ENCODE measurements at regions of chr7 and their contacts with region 1.

Region 1: DNA sequence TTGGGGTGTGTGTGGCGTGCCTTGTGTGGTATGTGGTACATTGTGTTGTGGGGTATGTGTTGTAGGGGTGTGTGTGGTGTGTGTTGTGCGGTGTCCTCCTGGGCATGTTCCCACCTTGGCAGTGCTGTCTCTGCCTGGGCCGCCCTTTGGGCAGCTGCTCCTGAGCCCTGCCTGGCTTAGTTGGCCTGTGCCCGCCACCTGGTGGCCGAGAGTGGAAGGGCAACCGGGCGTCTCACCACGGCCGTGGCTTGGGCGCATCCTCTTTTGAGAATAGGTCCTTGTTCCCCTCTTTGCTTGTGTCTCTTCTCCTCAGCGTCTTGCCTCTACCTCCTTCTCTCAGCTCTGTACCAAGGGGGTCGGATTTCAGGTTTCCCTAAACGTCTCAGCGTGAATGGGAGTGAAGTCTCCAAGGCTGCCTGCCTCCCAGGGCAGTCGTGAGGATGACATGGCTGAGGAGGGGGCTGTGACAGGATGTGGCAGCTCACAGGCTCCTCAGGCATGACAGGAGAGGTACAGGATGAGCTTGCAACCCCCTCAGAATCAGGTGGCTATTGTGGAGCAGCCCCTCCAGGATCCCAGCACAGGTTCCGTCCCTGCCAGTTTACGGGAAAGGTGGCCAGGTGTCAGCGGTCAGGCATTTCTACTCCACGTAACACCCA is 98.4 kb upstream of the PODXL start:
- DNase-seq: peak; percentile 84 to 91 (median 88)
- ATAC-seq: peak; percentile 92
- H3K4me3 ChIP-seq: no peak overlapping the region
- H3K27ac ChIP-seq: no peak overlapping the region
- H3K4me1 ChIP-seq: no peaks in the 10 kb centered on the region
- H3K27me3 ChIP-seq: no peaks in the 10 kb centered on the region
- CTCF ChIP-seq: peak; percentile 78 to 96 (median 90)
- POLR2A ChIP-seq: no peak

Region 2: GRCh38 chr7:131507592-131508331 is 147.0 kb before region 1 on chr7:
- intact Hi-C with region 1: loop called (anchors 5 kb)
- DNase-seq: peak; percentile 87 to 92 (median 89)
- ATAC-seq: peak; percentile 84
- H3K4me3 ChIP-seq: no peak overlapping the region
- H3K27ac ChIP-seq: peak overlapping the region in 1 of 4 donors; percentile 11
- H3K4me1 ChIP-seq: peaks cover 36% of the 10 kb centered on the region
- H3K27me3 ChIP-seq: no peaks in the 10 kb centered on the region
- CTCF ChIP-seq: peak; percentile 71 to 96 (median 92)
- POLR2A ChIP-seq: no peak

Region 3: DNA sequence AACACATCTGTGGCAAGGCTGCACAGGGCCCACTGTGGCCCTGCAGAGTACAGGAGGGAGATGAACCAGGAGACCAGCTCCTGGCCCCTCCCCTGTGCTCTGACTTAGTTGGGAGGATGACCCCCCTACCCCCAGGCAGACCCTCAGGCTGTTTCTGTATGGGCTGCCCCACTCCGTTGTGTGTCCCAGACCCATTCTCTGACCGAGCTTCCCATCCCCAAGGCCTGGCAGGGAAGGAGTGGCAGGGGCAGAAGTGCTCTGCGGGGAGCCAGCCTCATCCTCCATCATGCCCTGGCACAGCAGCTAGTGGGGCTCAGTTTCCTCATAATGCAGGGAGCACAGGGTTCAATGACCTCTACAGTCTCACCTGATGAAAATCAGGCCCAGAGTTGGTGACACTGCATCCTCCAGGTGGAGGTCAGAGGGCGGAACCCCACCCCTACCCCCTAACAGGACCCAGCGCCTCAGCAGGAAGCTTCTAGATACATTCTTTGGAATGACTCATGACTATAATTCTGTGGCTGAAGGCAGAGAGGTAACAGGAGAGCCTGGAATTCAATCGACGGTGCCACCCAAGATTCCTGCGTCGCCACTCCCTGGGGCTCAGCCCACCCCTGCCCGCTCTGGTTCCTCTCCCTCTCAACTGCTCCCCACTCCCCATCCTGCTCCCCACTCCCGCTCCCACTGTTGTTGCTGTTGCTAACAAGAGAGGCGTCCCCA is 116.6 kb before region 1 on chr7:
- intact Hi-C with region 1: no loop called
- DNase-seq: peak in 1 of 4 donors; percentile 44
- ATAC-seq: no peak
- H3K4me3 ChIP-seq: no peak overlapping the region
- H3K27ac ChIP-seq: peak overlapping the region; percentile 66 to 86 (median 84)
- H3K4me1 ChIP-seq: peaks cover 100% of the 10 kb centered on the region
- H3K27me3 ChIP-seq: no peaks in the 10 kb centered on the region
- CTCF ChIP-seq: no peak
- POLR2A ChIP-seq: no peak

Region 4: GRCh38 chr7:131562941-131563340 is 91.9 kb before region 1 on chr7:
- intact Hi-C with region 1: loop called (anchors 10 kb)
- DNase-seq: no peak
- ATAC-seq: no peak
- H3K4me3 ChIP-seq: no peak overlapping the region
- H3K27ac ChIP-seq: no peak overlapping the region
- H3K4me1 ChIP-seq: peaks cover 7% of the 10 kb centered on the region
- H3K27me3 ChIP-seq: no peaks in the 10 kb centered on the region
- CTCF ChIP-seq: no peak
- POLR2A ChIP-seq: no peak

Region 5: DNA sequence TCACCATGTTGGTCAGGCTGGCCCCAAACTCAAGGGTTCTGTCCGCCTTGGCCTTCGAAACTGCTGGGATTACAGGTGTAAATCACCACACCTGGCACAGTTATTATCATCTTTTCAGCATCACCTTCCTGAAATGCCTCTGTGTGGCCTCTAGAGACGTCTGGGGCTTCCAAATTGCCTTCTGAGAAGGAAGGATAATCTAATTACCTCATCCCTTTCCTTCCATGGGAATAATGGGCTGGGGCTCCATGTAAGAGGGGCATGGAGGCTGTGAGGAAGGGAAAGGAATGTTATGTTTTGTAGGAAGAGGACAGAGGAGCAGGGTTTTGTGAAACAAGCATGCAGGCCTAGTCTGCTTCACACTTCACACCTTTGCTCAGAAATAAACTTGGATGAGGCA is 76.2 kb before region 1 on chr7:
- intact Hi-C with region 1: no loop called
- DNase-seq: no peak
- ATAC-seq: no peak
- H3K4me3 ChIP-seq: no peak overlapping the region
- H3K27ac ChIP-seq: no peak overlapping the region
- H3K4me1 ChIP-seq: no peaks in the 10 kb centered on the region
- H3K27me3 ChIP-seq: no peaks in the 10 kb centered on the region
- CTCF ChIP-seq: no peak
- POLR2A ChIP-seq: no peak

Region 6: GRCh38 chr7:131959106-131959812 is 304.5 kb after region 1 on chr7:
- intact Hi-C with region 1: no loop called
- DNase-seq: no peak
- ATAC-seq: no peak
- H3K4me3 ChIP-seq: no peak overlapping the region
- H3K27ac ChIP-seq: no peak overlapping the region
- H3K4me1 ChIP-seq: no peaks in the 10 kb centered on the region
- H3K27me3 ChIP-seq: no peaks in the 10 kb centered on the region
- CTCF ChIP-seq: no peak
- POLR2A ChIP-seq: no peak

Region 7: GRCh38 chr7:132130497-132130896 is 475.7 kb after region 1 on chr7:
- intact Hi-C with region 1: no loop called
- DNase-seq: no peak
- ATAC-seq: no peak
- H3K4me3 ChIP-seq: no peak overlapping the region
- H3K27ac ChIP-seq: no peak overlapping the region
- H3K4me1 ChIP-seq: peaks cover 8% of the 10 kb centered on the region
- H3K27me3 ChIP-seq: no peaks in the 10 kb centered on the region
- CTCF ChIP-seq: no peak
- POLR2A ChIP-seq: no peak

Measured in body of pancreas (tissue), 4 donors.